ENCODE measurements at regions of chr5 and their contacts with region 1.

Region 1: GRCh38 chr5:113250341-113250953 is 184.3 kb downstream of the TSSK1B start:
- DNase-seq: no peak
- ATAC-seq: peak; percentile 63

Region 2: GRCh38 chr5:113123618-113124017 is 126.8 kb before region 1 on chr5:
- intact Hi-C with region 1: loop called (anchors 2 kb)
- DNase-seq: no peak
- ATAC-seq: no peak

Region 3: DNA sequence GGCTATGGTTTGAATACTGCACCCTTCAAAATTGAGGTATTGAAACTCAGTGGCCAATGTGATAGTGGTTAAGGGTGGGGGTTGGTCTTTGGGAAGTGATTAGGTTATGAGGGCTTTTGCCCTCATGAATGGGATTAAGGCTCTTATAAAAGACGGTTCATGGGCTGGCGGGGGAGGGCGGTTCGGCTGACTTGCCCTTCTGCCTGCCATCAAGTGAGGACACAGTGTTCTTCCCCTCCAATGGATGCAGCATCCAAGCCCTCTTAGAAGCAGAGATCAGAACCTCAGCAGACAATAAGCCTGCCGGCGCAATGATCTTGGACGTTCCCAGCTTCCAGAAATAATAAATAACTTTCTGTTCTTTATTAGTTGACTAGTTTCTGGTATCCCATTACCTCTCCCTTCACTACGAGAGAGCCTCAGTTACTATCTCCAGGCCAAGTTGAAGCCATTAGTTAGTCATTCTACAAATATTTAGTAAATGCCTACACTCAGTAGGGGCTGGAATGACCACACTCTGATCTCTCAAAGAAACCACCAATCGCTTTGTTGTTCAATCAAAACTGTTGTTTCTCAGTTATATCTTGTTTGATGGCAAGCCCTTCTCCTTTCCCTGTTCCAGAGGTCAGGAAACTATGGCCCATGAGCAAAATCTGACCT is 34.9 kb before region 1 on chr5:
- intact Hi-C with region 1: loop called (anchors 5 kb)
- DNase-seq: no peak
- ATAC-seq: no peak

Measured in Right ventricle myocardium inferior (tissue), 1 donor.